AG04450 (cell line): ENCODE measurements at regions of chr11 and their contacts with region 1.

Region 1: DNA sequence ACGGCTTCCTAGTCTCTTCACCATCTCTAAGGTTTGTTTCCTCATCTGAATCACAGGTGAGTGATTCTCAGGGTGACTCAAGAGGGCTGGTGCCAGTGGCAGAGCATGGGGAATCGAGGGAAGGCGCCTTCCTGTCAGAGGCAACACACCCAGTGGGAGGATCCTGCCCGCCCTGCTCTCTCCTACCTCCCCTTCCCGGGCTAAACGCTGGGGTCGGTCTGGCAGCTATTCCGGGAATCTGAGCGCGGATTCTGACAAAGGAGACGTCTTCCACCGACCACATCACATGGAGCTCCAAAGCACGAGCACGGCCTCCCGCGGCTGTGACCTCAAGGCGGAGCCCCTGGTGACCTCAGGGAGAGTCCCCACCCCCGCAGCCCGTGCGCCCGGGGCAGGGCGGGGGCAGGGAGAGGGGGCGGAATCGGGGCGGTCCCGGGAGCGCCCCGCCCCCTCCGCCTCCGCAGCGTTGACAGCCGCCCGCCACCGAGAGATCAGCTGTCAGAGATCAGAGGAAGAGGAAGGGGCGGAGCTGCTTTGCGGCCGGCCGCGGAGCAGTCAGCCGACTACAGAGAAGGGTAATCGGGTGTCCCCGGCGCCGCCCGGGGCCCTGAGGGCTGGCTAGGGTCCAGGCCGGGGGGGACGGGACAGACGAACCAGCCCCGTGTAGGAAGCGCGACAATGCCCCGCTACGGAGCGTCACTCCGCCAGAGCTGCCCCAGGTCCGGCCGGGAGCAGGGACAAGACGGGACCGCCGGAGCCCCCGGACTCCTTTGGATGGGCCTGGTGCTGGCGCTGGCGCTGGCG is at the start of gene SMPD1:
- DNase-seq: peak; percentile 58
- H3K4me3 ChIP-seq: peak within 1 kb of the TSS; percentile 84
- H3K27ac ChIP-seq: peak within 1 kb of the TSS; percentile 88
- H3K27me3 ChIP-seq: no peaks in the 10 kb centered on the region
- CTCF ChIP-seq: no peak
- polyA plus RNA-seq, gene SMPD1: 68.0 and 83.7 TPM in 2 replicates

Region 2: DNA sequence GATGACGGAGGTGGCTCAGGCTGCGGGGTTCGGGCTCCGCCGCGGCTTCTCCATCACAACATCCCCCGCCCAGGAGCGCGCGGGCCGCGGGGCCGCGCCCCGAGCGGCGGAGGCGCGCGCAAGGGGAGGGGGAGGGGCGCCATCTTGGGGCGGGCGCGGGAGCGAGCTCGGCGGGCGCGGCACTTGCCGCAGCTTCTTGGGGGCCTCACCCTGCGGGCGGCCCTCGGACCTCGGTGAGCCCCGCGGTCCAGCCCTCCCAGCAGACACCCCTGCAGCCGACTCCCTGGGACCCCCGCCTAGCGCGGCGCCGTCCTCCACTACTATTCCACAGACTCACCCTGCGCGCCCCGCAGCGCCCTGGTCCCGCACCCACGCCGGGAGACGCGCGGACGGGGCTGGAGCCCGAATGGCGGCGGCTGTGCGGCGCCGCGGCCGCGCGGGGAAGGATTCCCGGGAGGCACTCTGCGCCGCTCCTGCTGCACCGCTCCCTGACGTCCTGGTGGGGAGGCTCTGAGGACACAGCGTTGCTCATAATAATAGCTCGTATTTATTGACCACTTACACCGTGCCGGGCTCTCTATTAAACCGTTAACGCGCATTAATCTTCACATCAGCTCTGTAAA is 29.0 kb after region 1 on chr11 and contains the start of gene APBB1:
- CTCF ChIA-PET with region 1: no interaction called
- POLR2A ChIA-PET with region 1: interaction called, 10 read pairs
- DNase-seq: no peak
- H3K4me3 ChIP-seq: peak within 1 kb of the TSS; percentile 80
- H3K27ac ChIP-seq: no peak within 1 kb of the TSS
- H3K27me3 ChIP-seq: no peaks in the 10 kb centered on the region
- CTCF ChIP-seq: 0 out of 2 replicates have a peak, but pooled peaks have one; percentile 8
- polyA plus RNA-seq, gene APBB1: 42.2 and 54.5 TPM in 2 replicates

Region 3: DNA sequence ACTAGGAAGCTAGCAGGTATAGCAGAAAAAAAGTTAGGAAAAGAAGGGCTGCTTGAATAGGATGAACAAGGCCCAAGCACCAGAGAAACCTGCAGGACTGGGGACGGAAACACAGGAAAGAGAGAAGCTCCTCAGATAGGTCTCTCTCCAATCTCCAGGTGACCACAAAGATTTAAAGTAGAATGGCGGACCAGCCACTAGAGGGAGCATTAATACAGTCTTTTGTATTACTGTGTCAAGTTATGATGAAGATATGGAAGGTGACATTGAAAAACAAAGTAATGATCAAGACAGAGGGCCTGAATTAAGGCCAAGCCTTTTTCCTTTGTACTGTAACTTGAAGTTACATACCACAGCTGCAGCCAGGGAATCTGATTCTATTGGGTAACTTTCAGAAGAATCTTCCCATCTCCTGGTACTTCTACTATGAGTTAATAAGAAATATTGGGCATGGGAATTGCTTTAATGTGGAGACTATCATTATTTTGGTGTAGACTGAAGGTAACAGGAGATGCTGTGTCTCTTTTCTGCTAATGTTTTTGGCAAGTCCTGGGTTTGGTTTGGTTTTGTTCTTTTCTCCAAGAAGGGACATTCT is 347.8 kb after region 1 on chr11:
- CTCF ChIA-PET with region 1: no interaction called
- POLR2A ChIA-PET with region 1: no interaction called
- DNase-seq: no peak
- H3K4me3 ChIP-seq: no peak overlapping the region
- H3K27ac ChIP-seq: no peak overlapping the region
- H3K27me3 ChIP-seq: peaks cover 3% of the 10 kb centered on the region
- CTCF ChIP-seq: peak; percentile 74